Activated CD4-positive, alpha-beta T cell treated with anti-CD3 and anti-CD28 coated beads for 36 hours (primary cell): ENCODE measurements at regions of chr5 and their contacts with region 1.

Region 1: DNA sequence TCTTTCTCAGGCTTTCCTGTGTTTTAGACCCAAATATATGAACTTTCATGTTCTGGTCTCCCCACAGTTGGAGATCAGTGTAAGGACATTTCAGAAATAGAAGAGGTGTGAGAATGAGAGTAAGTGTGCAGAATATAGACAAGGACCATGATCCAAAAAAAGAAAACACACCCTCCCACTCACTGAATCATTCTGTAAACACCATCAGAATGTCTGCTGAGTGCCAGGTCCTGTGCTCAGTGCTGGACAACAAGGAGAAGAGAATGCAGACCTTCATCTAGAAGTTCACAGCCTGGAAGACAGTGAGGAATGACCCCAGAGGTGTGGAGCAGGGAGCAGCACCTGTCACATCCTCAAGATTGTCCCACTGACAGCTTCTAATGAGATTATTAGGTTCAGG is 19.1 kb upstream of the SH3RF2 start:
- DNase-seq: no peak
- ATAC-seq: no peak
- H3K4me3 Mint-ChIP-seq: no peak overlapping the region
- H3K27ac Mint-ChIP-seq: no peak overlapping the region
- H3K4me1 Mint-ChIP-seq: peaks cover 9% of the 10 kb centered on the region
- H3K27me3 Mint-ChIP-seq: peaks cover 2% of the 10 kb centered on the region

Region 2: GRCh38 chr5:145960848-145961600 is 43.7 kb after region 1 on chr5:
- CTCF ChIA-PET with region 1: no interaction called
- POLR2A ChIA-PET with region 1: no interaction called
- intact Hi-C with region 1: loop called in 1 of 2 experiments (anchors 5 kb)
- DNase-seq: no peak
- ATAC-seq: no peak
- H3K4me3 Mint-ChIP-seq: no peak overlapping the region
- H3K27ac Mint-ChIP-seq: no peak overlapping the region
- H3K4me1 Mint-ChIP-seq: peaks cover 12% of the 10 kb centered on the region
- H3K27me3 Mint-ChIP-seq: peaks cover 7% of the 10 kb centered on the region